Natural killer cell (primary cell): ENCODE measurements at regions of chr1 and their contacts with region 1.

Region 1: DNA sequence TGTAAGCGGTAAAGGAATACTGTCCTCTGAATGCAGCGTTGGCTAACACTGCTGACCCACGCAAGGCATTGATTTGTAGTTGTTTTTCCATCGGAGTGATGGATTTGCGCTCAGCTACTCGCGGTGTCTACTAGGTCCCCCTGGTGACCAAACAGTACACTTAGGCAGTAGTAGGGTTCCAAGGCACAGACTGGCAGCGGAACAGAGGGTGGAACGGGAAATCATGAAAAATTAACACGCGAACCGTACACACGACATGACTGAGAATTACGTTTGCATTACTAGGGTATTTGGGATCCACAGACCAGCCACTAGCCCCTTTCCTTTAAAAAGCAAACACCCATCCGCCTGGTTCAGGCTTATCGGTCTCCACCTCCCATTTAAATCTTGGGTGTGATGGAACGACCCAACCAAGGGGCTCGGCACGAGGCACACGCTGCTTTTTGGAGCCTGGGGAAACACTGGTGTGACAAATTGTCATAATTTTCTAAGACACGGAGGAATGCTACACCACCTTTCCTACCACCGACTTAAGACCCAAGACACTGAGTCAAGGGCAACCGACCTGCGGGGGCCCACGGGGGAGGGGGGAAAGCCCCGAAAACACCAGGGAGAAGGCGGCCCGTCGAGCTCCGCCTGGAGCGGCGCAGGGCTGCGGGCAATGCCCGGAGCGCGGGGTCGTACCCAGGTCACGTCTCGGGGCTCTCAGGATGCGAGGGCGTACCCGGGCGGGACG is 699 bp downstream of the DIPK1A start:
- DNase-seq: peak; percentile 69 to 89
- ATAC-seq: peak; percentile 34 to 63 (median 39)
- H3K4me3 ChIP-seq: peak overlapping the region; percentile 91
- H3K4me3 Mint-ChIP-seq: peak overlapping the region; percentile 95
- H3K27ac ChIP-seq: peak overlapping the region; percentile 92
- H3K27ac Mint-ChIP-seq: peak overlapping the region; percentile 93 to 95
- H3K4me1 ChIP-seq: peaks cover 46% of the 10 kb centered on the region
- H3K4me1 Mint-ChIP-seq: peaks cover 39 to 40% of the 10 kb centered on the region in 2 donors
- H3K27me3 ChIP-seq: no peaks in the 10 kb centered on the region
- H3K27me3 Mint-ChIP-seq: no peaks in the 10 kb centered on the region
- CTCF ChIP-seq: peak; percentile 49

Region 2: GRCh38 chr1:92858564-92859399 is 101.8 kb before region 1 on chr1:
- intact Hi-C with region 1: loop called (anchors 1 kb)
- DNase-seq: peak in 1 of 2 donors; percentile 88
- ATAC-seq: peak; percentile 97 to 99 (median 98)
- H3K4me3 ChIP-seq: no peak overlapping the region
- H3K4me3 Mint-ChIP-seq: peak overlapping the region; percentile 51
- H3K27ac ChIP-seq: no peak overlapping the region
- H3K27ac Mint-ChIP-seq: peak overlapping the region; percentile 22 to 81
- H3K4me1 ChIP-seq: no peaks in the 10 kb centered on the region
- H3K4me1 Mint-ChIP-seq: peaks cover 15 to 20% of the 10 kb centered on the region in 2 donors
- H3K27me3 ChIP-seq: no peaks in the 10 kb centered on the region
- H3K27me3 Mint-ChIP-seq: no peaks in the 10 kb centered on the region
- CTCF ChIP-seq: peak; percentile 97

Region 3: GRCh38 chr1:92882819-92883218 is 77.7 kb before region 1 on chr1:
- intact Hi-C with region 1: loop called (anchors 1 kb)
- DNase-seq: peak; percentile 34 to 78
- ATAC-seq: peak; percentile 93 to 96 (median 96)
- H3K4me3 ChIP-seq: no peak overlapping the region
- H3K4me3 Mint-ChIP-seq: peak overlapping the region; percentile 83
- H3K27ac ChIP-seq: peak overlapping the region; percentile 70
- H3K27ac Mint-ChIP-seq: peak overlapping the region; percentile 97
- H3K4me1 ChIP-seq: peaks cover 35% of the 10 kb centered on the region
- H3K4me1 Mint-ChIP-seq: peaks cover 36 to 47% of the 10 kb centered on the region in 2 donors
- H3K27me3 ChIP-seq: no peaks in the 10 kb centered on the region
- H3K27me3 Mint-ChIP-seq: no peaks in the 10 kb centered on the region
- CTCF ChIP-seq: no peak

Region 4: GRCh38 chr1:92980732-92981647 is 20.4 kb after region 1 on chr1:
- intact Hi-C with region 1: loop called (anchors 1 kb)
- DNase-seq: peak in 1 of 2 donors; percentile 91
- ATAC-seq: peak; percentile 90 to 97 (median 92)
- H3K4me3 ChIP-seq: no peak overlapping the region
- H3K4me3 Mint-ChIP-seq: peak overlapping the region; percentile 60
- H3K27ac ChIP-seq: peak overlapping the region; percentile 83
- H3K27ac Mint-ChIP-seq: peak overlapping the region; percentile 92 to 93
- H3K4me1 ChIP-seq: peaks cover 20% of the 10 kb centered on the region
- H3K4me1 Mint-ChIP-seq: peaks cover 12 to 20% of the 10 kb centered on the region in 2 donors
- H3K27me3 ChIP-seq: no peaks in the 10 kb centered on the region
- H3K27me3 Mint-ChIP-seq: no peaks in the 10 kb centered on the region
- CTCF ChIP-seq: no peak

Region 5: GRCh38 chr1:92994105-92994712 is 33.6 kb after region 1 on chr1:
- intact Hi-C with region 1: loop called (anchors 2 kb)
- DNase-seq: peak; percentile 25 to 92
- ATAC-seq: peak; percentile 86 to 98 (median 96)
- H3K4me3 ChIP-seq: no peak overlapping the region
- H3K4me3 Mint-ChIP-seq: no peak overlapping the region
- H3K27ac ChIP-seq: no peak overlapping the region
- H3K27ac Mint-ChIP-seq: no peak overlapping the region
- H3K4me1 ChIP-seq: peaks cover 27% of the 10 kb centered on the region
- H3K4me1 Mint-ChIP-seq: peaks cover 21 to 26% of the 10 kb centered on the region in 2 donors
- H3K27me3 ChIP-seq: no peaks in the 10 kb centered on the region
- H3K27me3 Mint-ChIP-seq: peaks cover 0 to 4% of the 10 kb centered on the region in 2 donors
- CTCF ChIP-seq: peak; percentile 85

Region 6: GRCh38 chr1:93129507-93130099 is 169.0 kb after region 1 on chr1:
- intact Hi-C with region 1: no loop called
- DNase-seq: no peak
- ATAC-seq: no peak
- H3K4me3 ChIP-seq: no peak overlapping the region
- H3K4me3 Mint-ChIP-seq: no peak overlapping the region
- H3K27ac ChIP-seq: no peak overlapping the region
- H3K27ac Mint-ChIP-seq: no peak overlapping the region
- H3K4me1 ChIP-seq: no peaks in the 10 kb centered on the region
- H3K4me1 Mint-ChIP-seq: peaks cover 8 to 11% of the 10 kb centered on the region in 2 donors
- H3K27me3 ChIP-seq: no peaks in the 10 kb centered on the region
- H3K27me3 Mint-ChIP-seq: no peaks in the 10 kb centered on the region
- CTCF ChIP-seq: no peak

Region 7: DNA sequence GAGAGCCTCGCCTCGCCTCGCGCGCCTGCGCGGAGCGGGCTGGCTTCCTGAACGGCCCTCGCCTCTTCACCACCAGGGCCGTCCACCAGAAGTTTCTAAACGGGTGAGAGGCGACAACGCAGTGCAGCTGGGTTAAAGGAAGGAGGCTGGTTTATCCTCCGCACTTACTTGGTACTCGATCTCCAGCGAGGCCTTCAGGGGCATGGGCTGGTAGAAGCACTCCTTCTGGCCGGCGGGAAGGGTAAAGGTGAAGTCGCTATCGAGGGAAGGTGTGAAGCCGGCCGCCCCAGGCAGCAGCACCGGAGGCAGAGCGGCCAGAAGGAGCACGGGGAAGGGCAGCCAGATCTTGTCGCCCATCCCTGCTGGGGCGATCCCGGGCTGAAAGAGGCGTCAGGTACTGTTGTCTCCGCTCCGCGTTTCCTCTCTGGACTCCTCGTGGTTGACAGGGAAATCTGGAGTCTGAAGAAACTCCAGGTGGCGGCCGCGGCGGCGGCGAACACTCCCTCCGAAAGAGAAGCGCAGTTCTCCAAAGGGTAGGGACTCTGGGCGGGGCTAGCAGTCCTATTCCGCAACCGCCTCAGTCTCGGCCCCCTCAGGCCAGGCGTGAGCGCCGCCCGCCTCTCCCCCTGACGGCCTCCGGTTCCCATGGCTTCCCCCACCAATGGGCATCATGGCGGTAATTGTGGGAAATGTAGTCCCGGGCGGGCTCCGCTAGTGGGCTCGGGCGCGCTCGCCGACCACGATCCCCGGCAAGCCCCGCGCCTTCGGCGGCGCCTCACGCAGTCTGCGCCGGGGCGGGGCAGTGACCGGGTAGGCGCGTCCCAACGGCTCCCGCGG is 219.5 kb after region 1 on chr1 and contains the start of gene TMED5:
- intact Hi-C with region 1: loop called (anchors 2 kb)
- DNase-seq: peak; percentile 93 to 97
- ATAC-seq: peak; percentile 78 to 93 (median 86)
- H3K4me3 ChIP-seq: peak within 1 kb of the TSS; percentile 93
- H3K4me3 Mint-ChIP-seq: peak within 1 kb of the TSS; percentile 89
- H3K27ac ChIP-seq: peak within 1 kb of the TSS; percentile 97
- H3K27ac Mint-ChIP-seq: peak within 1 kb of the TSS; percentile 95
- H3K4me1 ChIP-seq: peaks cover 26% of the 10 kb centered on the region
- H3K4me1 Mint-ChIP-seq: peaks cover 35 to 54% of the 10 kb centered on the region in 2 donors
- H3K27me3 ChIP-seq: no peaks in the 10 kb centered on the region
- H3K27me3 Mint-ChIP-seq: no peaks in the 10 kb centered on the region
- CTCF ChIP-seq: peak; percentile 11
- total RNA-seq, gene TMED5: 64.6 to 73.5 (median 67.0) TPM

Region 8: GRCh38 chr1:93345633-93346420 is 385.3 kb after region 1 on chr1 and contains the start of gene DR1:
- intact Hi-C with region 1: loop called (anchors 2 kb)
- DNase-seq: peak; percentile 86 to 94
- ATAC-seq: peak; percentile 74 to 89 (median 78)
- H3K4me3 ChIP-seq: peak within 1 kb of the TSS; percentile 83
- H3K4me3 Mint-ChIP-seq: peak within 1 kb of the TSS; percentile 100
- H3K27ac ChIP-seq: peak within 1 kb of the TSS; percentile 89
- H3K27ac Mint-ChIP-seq: peak within 1 kb of the TSS; percentile 99 to 100
- H3K4me1 ChIP-seq: no peaks in the 10 kb centered on the region
- H3K4me1 Mint-ChIP-seq: peaks cover 46 to 48% of the 10 kb centered on the region in 2 donors
- H3K27me3 ChIP-seq: no peaks in the 10 kb centered on the region
- H3K27me3 Mint-ChIP-seq: no peaks in the 10 kb centered on the region
- CTCF ChIP-seq: no peak
- total RNA-seq, gene DR1: 84.3 to 91.4 (median 85.3) TPM